GM12878 (cell line): ENCODE measurements at regions of chr3 and their contacts with region 1.

Region 1: DNA sequence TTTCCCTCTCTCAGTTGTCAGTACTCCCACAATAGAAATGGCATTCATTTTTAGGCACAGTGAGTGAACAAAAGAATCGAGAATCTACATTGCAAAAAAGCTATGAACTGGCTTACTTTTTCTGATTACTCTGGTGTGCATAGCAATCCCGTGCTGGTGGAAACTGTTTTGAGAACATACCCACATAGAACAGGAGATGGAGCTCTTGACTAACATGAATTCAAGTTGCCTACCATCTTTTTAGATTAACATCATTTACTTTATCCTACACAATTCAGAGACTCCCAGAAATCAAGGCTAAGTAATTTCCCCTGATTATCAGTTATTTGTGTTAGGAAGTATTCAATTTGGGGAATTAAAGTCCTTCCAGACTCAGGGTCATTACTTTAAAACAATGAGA is 326.6 kb downstream of the ARPP21 start:
- DNase-seq: no peak
- ATAC-seq: peak; percentile 75
- H3K4me3 ChIP-seq: no peak overlapping the region
- H3K27ac ChIP-seq: no peak overlapping the region
- H3K4me1 ChIP-seq: no peaks in the 10 kb centered on the region
- H3K27me3 ChIP-seq: no peaks in the 10 kb centered on the region
- CTCF ChIP-seq: peak; percentile 22 to 59 (median 24); a peak in 4 of 6 replicates
- EP300 ChIP-seq: no peak
- POLR2A ChIP-seq: no peak
- RAD21 ChIP-seq: peak; percentile 63

Region 2: GRCh38 chr3:35931867-35932266 is 34.0 kb before region 1 on chr3:
- CTCF ChIA-PET with region 1: no interaction called
- POLR2A ChIA-PET with region 1: no interaction called
- RAD21 ChIA-PET with region 1: no interaction called
- SMC1A ChIA-PET with region 1: no interaction called
- in situ Hi-C with region 1: no loop called
- intact Hi-C with region 1: no loop called
- DNase-seq: no peak
- ATAC-seq: no peak
- H3K4me3 ChIP-seq: no peak overlapping the region
- H3K27ac ChIP-seq: no peak overlapping the region
- H3K4me1 ChIP-seq: no peaks in the 10 kb centered on the region
- H3K27me3 ChIP-seq: no peaks in the 10 kb centered on the region
- CTCF ChIP-seq: no peak
- EP300 ChIP-seq: no peak
- POLR2A ChIP-seq: no peak
- RAD21 ChIP-seq: no peak

Region 3: DNA sequence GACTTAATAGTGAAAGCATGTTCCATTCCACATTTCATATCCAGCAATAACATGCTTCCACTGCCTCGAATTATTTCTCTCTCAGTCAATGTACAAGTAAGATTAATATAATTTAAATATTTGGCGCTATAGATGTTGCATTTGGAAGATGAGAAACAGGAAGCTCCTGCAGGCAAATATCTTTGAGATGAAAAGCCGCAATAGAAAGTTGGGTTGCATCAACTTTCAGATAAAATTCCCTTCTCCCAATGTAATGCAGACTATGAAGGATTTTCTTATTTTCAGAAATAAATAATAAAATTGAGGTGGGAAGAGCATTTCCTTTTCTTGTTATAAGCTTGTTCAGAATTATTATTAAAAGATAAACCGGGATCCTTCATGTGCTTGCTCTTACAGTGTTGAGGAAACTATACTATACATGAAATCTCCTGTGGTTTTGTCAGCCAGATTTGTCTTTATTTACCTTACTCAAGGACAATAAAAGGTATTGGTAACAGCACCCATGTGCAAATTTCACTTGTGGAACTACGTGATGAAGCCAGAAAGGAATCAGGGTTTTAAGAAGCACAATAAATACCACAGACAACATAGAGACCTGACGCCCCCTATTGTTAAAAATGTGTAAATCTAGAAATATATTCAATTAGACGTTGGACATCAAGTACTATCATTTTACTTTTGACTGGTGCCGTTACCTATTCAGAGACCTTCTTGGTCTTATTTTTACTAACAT is 19.6 kb before region 1 on chr3:
- CTCF ChIA-PET with region 1: interaction called, 12 read pairs
- POLR2A ChIA-PET with region 1: no interaction called
- RAD21 ChIA-PET with region 1: no interaction called
- SMC1A ChIA-PET with region 1: interaction called, 3 read pairs
- in situ Hi-C with region 1: no loop called
- intact Hi-C with region 1: no loop called
- DNase-seq: no peak
- ATAC-seq: peak; percentile 59
- H3K4me3 ChIP-seq: no peak overlapping the region
- H3K27ac ChIP-seq: no peak overlapping the region
- H3K4me1 ChIP-seq: no peaks in the 10 kb centered on the region
- H3K27me3 ChIP-seq: no peaks in the 10 kb centered on the region
- CTCF ChIP-seq: peak; percentile 18 to 51 (median 31); a peak in 3 of 6 replicates
- EP300 ChIP-seq: no peak
- POLR2A ChIP-seq: no peak
- RAD21 ChIP-seq: peak; percentile 28; the same call in 1 of the 2 replicates

Region 4: DNA sequence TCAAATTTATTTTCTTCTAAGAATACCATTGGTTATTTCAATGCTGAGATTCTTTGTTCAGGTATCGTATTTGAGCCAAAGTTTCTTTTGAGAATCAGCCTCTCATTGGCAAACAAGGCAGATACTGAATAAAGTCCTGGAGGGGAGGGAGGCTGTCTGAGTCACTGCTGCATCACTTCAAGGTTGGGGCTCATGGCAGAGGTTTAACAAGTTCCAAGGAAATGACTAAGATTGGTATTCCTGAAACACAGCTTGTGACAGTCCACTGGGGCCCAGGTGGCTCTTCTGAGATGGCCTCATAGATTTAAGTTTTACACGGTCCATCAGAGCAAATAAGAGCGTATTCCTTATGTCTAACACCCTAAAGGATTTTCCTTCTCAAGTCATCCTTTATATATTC is 200.6 kb after region 1 on chr3:
- CTCF ChIA-PET with region 1: no interaction called
- POLR2A ChIA-PET with region 1: no interaction called
- RAD21 ChIA-PET with region 1: no interaction called
- SMC1A ChIA-PET with region 1: no interaction called
- in situ Hi-C with region 1: no loop called
- intact Hi-C with region 1: no loop called
- DNase-seq: no peak
- ATAC-seq: no peak
- H3K4me3 ChIP-seq: no peak overlapping the region
- H3K27ac ChIP-seq: no peak overlapping the region
- H3K4me1 ChIP-seq: no peaks in the 10 kb centered on the region
- H3K27me3 ChIP-seq: no peaks in the 10 kb centered on the region
- CTCF ChIP-seq: no peak
- EP300 ChIP-seq: no peak
- POLR2A ChIP-seq: no peak
- RAD21 ChIP-seq: no peak

Region 5: GRCh38 chr3:36540888-36541518 is 575.1 kb after region 1 on chr3:
- CTCF ChIA-PET with region 1: interaction called, 17 read pairs
- POLR2A ChIA-PET with region 1: no interaction called
- RAD21 ChIA-PET with region 1: interaction called, 5 read pairs
- SMC1A ChIA-PET with region 1: interaction called, 9 read pairs
- in situ Hi-C with region 1: no loop called
- intact Hi-C with region 1: loop called (anchors 2 kb)
- DNase-seq: no peak
- ATAC-seq: no peak
- H3K4me3 ChIP-seq: no peak overlapping the region
- H3K27ac ChIP-seq: no peak overlapping the region
- H3K4me1 ChIP-seq: no peaks in the 10 kb centered on the region
- H3K27me3 ChIP-seq: peaks cover 0 to 1% of the 10 kb centered on the region in 2 experiments; a peak in 2 of 4 replicates
- CTCF ChIP-seq: peak; percentile 50 to 65 (median 63)
- EP300 ChIP-seq: no peak
- POLR2A ChIP-seq: no peak
- RAD21 ChIP-seq: peak; percentile 39